ENCODE measurements at regions of chr15 and their contacts with region 1.

Region 1: GRCh38 chr15:101641166-101641764 is 10.9 kb downstream of the TM2D3 start:
- DNase-seq: peak; percentile 49 to 89 (median 71)
- ATAC-seq: peak; percentile 53 to 75 (median 68)
- H3K4me3 ChIP-seq: no peak overlapping the region
- H3K4me3 Mint-ChIP-seq: peak overlapping the region in 1 of 3 donors; percentile 43
- H3K27ac ChIP-seq: peak overlapping the region; percentile 55
- H3K27ac Mint-ChIP-seq: peak overlapping the region; percentile 85 to 86
- H3K4me1 ChIP-seq: peaks cover 4 to 15% of the 10 kb centered on the region in 2 experiments
- H3K4me1 Mint-ChIP-seq: peaks cover 34 to 38% (median 36%) of the 10 kb centered on the region in 3 donors
- H3K27me3 ChIP-seq: no peaks in the 10 kb centered on the region
- H3K27me3 Mint-ChIP-seq: no peaks in the 10 kb centered on the region

Region 2: GRCh38 chr15:101288908-101289513 is 352.3 kb before region 1 on chr15:
- CTCF ChIA-PET with region 1: interaction called, 5 to 45 read pairs
- POLR2A ChIA-PET with region 1: interaction called, 4 to 5 read pairs
- DNase-seq: peak in 5 of 35 experiments; percentile 17 to 78 (median 33)
- ATAC-seq: peak; percentile 47 to 78 (median 58)
- H3K4me3 ChIP-seq: no peak overlapping the region
- H3K4me3 Mint-ChIP-seq: peak overlapping the region in 1 of 3 donors; percentile 0
- H3K27ac ChIP-seq: no peak overlapping the region
- H3K27ac Mint-ChIP-seq: peak overlapping the region in 1 of 2 donors; percentile 21
- H3K4me1 ChIP-seq: peaks cover 19% of the 10 kb centered on the region in 2 experiments
- H3K4me1 Mint-ChIP-seq: peaks cover 37 to 57% (median 54%) of the 10 kb centered on the region in 3 donors
- H3K27me3 ChIP-seq: no peaks in the 10 kb centered on the region
- H3K27me3 Mint-ChIP-seq: no peaks in the 10 kb centered on the region

Region 3: DNA sequence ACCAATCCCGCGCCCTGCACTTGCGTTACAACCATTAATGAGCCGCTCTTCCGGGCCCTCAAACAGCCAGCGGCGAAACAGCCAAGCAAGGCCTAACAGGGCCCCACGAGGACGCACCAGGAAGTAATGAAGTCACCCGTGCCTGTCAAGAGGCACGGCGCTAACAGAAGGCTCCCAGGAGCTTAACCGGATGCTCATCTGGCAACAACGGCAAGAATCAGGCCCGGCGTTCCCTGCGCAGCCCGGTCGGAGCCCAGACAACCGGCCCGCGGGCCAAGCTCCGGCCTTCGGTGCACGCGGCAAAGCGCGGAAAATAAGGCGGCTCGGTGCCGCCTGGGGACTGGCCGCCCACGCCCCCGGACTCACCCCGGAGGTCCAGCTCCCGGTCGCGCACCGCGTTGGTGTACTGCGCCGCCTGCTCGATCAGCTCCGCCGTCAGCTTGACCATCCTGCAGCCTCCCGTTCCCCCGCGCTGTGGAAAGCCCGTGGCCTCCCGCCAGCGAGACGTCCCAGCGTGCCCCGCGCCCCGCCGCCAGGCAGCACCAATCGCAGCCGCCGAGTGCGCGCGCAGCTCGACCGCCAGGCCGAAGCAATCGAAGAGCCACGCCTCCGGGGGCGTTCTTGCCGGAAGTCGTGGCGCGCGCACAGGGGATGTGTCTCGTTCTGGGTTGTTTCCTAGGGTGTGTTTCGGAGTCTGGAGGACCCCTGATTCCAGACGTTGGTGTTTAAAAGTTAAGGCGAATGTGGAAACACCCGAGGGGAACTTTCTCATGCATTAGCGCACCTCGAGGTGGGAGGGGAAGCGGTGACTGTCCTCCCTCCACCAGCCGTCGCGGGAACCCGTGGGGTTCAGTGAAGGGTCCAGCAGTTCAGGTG is 346.3 kb before region 1 on chr15 and contains the start of gene SNRPA1:
- CTCF ChIA-PET with region 1: interaction called, 7 to 45 read pairs
- POLR2A ChIA-PET with region 1: interaction called in 1 of 2 experiments, 4 read pairs
- DNase-seq: peak; percentile 91 to 98 (median 96)
- ATAC-seq: peak; percentile 81 to 85 (median 84)
- H3K4me3 ChIP-seq: peak within 1 kb of the TSS; percentile 77 to 96
- H3K4me3 Mint-ChIP-seq: peak within 1 kb of the TSS; percentile 94 to 98 (median 96)
- H3K27ac ChIP-seq: peak within 1 kb of the TSS; percentile 95
- H3K27ac Mint-ChIP-seq: peak within 1 kb of the TSS; percentile 94
- H3K4me1 ChIP-seq: peaks cover 19 to 23% of the 10 kb centered on the region in 2 experiments
- H3K4me1 Mint-ChIP-seq: peaks cover 41 to 51% (median 48%) of the 10 kb centered on the region in 3 donors
- H3K27me3 ChIP-seq: no peaks in the 10 kb centered on the region
- H3K27me3 Mint-ChIP-seq: no peaks in the 10 kb centered on the region
- total RNA-seq, gene SNRPA1: 77.0 to 199 (median 97.0) TPM

Region 4: GRCh38 chr15:101320501-101321052 is 320.7 kb before region 1 on chr15:
- CTCF ChIA-PET with region 1: interaction called in 1 of 2 experiments, 14 read pairs
- POLR2A ChIA-PET with region 1: interaction called in 1 of 2 experiments, 3 read pairs
- DNase-seq: peak; percentile 37 to 82 (median 62)
- ATAC-seq: peak; percentile 87 to 99 (median 96)
- H3K4me3 ChIP-seq: peak overlapping the region; percentile 36 to 58
- H3K4me3 Mint-ChIP-seq: peak overlapping the region; percentile 69 to 79 (median 77)
- H3K27ac ChIP-seq: peak overlapping the region; percentile 67
- H3K27ac Mint-ChIP-seq: peak overlapping the region; percentile 92
- H3K4me1 ChIP-seq: peaks cover 3 to 16% of the 10 kb centered on the region in 2 experiments
- H3K4me1 Mint-ChIP-seq: peaks cover 13 to 15% (median 14%) of the 10 kb centered on the region in 3 donors
- H3K27me3 ChIP-seq: peaks cover 0 to 48% of the 10 kb centered on the region in 2 experiments
- H3K27me3 Mint-ChIP-seq: peaks cover 15 to 39% of the 10 kb centered on the region in 2 donors

Region 5: GRCh38 chr15:101613130-101614000 is 27.9 kb before region 1 on chr15:
- CTCF ChIA-PET with region 1: no interaction called
- POLR2A ChIA-PET with region 1: no interaction called
- DNase-seq: no peak
- ATAC-seq: no peak
- H3K4me3 ChIP-seq: no peak overlapping the region
- H3K4me3 Mint-ChIP-seq: no peak overlapping the region
- H3K27ac ChIP-seq: no peak overlapping the region
- H3K27ac Mint-ChIP-seq: no peak overlapping the region
- H3K4me1 ChIP-seq: no peaks in the 10 kb centered on the region
- H3K4me1 Mint-ChIP-seq: no peaks in the 10 kb centered on the region
- H3K27me3 ChIP-seq: peaks cover 0 to 11% of the 10 kb centered on the region in 2 experiments
- H3K27me3 Mint-ChIP-seq: no peaks in the 10 kb centered on the region

Region 6: GRCh38 chr15:101652098-101652782 is 11.0 kb after region 1 on chr15 and contains the start of gene TM2D3:
- CTCF ChIA-PET with region 1: interaction called in 1 of 2 experiments, 12 read pairs
- POLR2A ChIA-PET with region 1: no interaction called
- DNase-seq: peak; percentile 86 to 98 (median 93)
- ATAC-seq: peak; percentile 87 to 92 (median 90)
- H3K4me3 ChIP-seq: peak within 1 kb of the TSS; percentile 78 to 95
- H3K4me3 Mint-ChIP-seq: peak within 1 kb of the TSS; percentile 80 to 92 (median 91)
- H3K27ac ChIP-seq: peak within 1 kb of the TSS; percentile 94
- H3K27ac Mint-ChIP-seq: peak within 1 kb of the TSS; percentile 94 to 95
- H3K4me1 ChIP-seq: peaks cover 12 to 19% of the 10 kb centered on the region in 2 experiments
- H3K4me1 Mint-ChIP-seq: peaks cover 35 to 51% (median 46%) of the 10 kb centered on the region in 3 donors
- H3K27me3 ChIP-seq: no peaks in the 10 kb centered on the region
- H3K27me3 Mint-ChIP-seq: no peaks in the 10 kb centered on the region
- total RNA-seq, gene TM2D3: 55.7 to 96.9 (median 64.6) TPM